CD4-positive, alpha-beta T cell (primary cell): ENCODE measurements at regions of chr11 and their contacts with region 1.

Region 1: GRCh38 chr11:118870396-118871345 is 13.0 kb upstream of the CXCR5 start:
- DNase-seq: peak in 6 of 14 experiments; percentile 14 to 66 (median 53)
- ATAC-seq: peak; percentile 44
- H3K4me3 ChIP-seq: peak overlapping the region; percentile 44
- H3K4me3 Mint-ChIP-seq: peak overlapping the region; percentile 76
- H3K27ac ChIP-seq: peak overlapping the region; percentile 94
- H3K27ac Mint-ChIP-seq: peak overlapping the region; percentile 98
- H3K4me1 ChIP-seq: peaks cover 70% of the 10 kb centered on the region
- H3K4me1 Mint-ChIP-seq: peaks cover 53% of the 10 kb centered on the region
- H3K27me3 ChIP-seq: no peaks in the 10 kb centered on the region
- H3K27me3 Mint-ChIP-seq: no peaks in the 10 kb centered on the region
- CTCF ChIP-seq: no peak

Region 2: DNA sequence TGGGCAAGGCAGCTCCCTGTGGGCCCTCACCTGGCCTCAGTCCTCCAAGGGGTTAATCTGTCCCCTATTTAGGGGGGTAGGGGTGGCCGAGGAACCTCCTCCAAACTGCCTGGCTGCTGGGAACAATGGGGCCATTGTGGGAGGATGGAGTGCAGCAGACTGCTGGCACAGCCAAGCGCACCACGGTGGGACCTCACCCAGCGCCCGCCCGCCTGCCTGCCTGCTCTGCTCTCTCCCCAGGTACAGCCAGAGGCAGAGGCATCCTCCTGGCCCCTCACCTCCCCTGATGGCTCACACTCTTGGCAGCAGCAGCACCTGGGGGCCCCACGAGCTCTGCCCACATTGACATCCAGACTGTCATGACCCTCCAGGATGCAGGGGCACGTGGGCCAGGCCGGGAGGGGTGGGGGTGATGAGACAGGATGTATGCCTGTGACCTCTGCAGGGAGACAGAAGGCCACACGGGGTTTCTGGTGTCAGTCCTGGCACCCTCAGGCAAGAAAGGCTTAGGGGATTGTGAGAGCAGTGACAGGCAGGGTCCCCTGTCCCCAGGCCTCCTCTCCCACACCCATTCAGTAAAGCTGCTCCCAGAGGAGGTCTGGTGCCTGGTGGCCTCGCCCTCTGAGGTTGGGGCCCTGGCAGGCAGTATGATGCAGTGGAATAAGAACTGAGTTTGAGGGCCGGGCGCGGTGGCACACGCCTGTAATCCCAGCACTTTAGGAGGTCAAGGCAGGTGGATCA is 43.7 kb after region 1 on chr11:
- CTCF ChIA-PET with region 1: no interaction called
- POLR2A ChIA-PET with region 1: interaction called, 16 read pairs
- intact Hi-C with region 1: no loop called
- DNase-seq: peak in 13 of 14 experiments; percentile 62 to 93 (median 80)
- ATAC-seq: peak; percentile 49
- H3K4me3 ChIP-seq: peak overlapping the region; percentile 54
- H3K4me3 Mint-ChIP-seq: peak overlapping the region; percentile 87
- H3K27ac ChIP-seq: peak overlapping the region; percentile 80 to 96
- H3K27ac Mint-ChIP-seq: peak overlapping the region; percentile 100
- H3K4me1 ChIP-seq: peaks cover 98% of the 10 kb centered on the region
- H3K4me1 Mint-ChIP-seq: peaks cover 86% of the 10 kb centered on the region
- H3K27me3 ChIP-seq: no peaks in the 10 kb centered on the region
- H3K27me3 Mint-ChIP-seq: no peaks in the 10 kb centered on the region
- CTCF ChIP-seq: no peak

Region 3: DNA sequence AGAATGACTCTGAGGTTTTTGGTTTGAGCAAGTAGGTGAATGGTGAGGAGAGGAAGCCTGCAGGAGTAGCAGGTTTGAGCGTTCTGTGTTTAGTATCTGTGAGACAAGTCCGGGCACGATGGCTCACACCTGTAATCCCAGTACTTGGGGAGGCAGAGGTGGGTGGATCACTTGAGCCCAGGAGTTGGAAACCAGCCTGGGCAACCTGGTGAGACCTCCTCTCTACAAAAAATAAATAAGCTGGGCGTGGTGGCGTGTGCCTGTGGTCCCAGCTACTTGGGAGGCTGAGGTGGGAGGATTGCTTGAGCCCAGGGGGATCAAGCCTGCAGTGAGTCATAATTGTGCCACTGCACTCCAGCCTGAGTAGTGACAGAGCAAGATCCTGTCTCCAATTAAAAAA is 117.6 kb after region 1 on chr11:
- CTCF ChIA-PET with region 1: no interaction called
- POLR2A ChIA-PET with region 1: no interaction called
- intact Hi-C with region 1: no loop called
- DNase-seq: no peak
- ATAC-seq: no peak
- H3K4me3 ChIP-seq: no peak overlapping the region
- H3K4me3 Mint-ChIP-seq: no peak overlapping the region
- H3K27ac ChIP-seq: no peak overlapping the region
- H3K27ac Mint-ChIP-seq: no peak overlapping the region
- H3K4me1 ChIP-seq: no peaks in the 10 kb centered on the region
- H3K4me1 Mint-ChIP-seq: no peaks in the 10 kb centered on the region
- H3K27me3 ChIP-seq: no peaks in the 10 kb centered on the region
- H3K27me3 Mint-ChIP-seq: no peaks in the 10 kb centered on the region
- CTCF ChIP-seq: no peak

Region 4: GRCh38 chr11:119051440-119052162 is 180.9 kb after region 1 on chr11:
- CTCF ChIA-PET with region 1: no interaction called
- POLR2A ChIA-PET with region 1: no interaction called
- intact Hi-C with region 1: loop called in 1 of 2 experiments (anchors 5 kb)
- DNase-seq: peak in 2 of 14 experiments; percentile 68 to 76
- ATAC-seq: peak; percentile 20
- H3K4me3 ChIP-seq: no peak overlapping the region
- H3K4me3 Mint-ChIP-seq: no peak overlapping the region
- H3K27ac ChIP-seq: no peak overlapping the region
- H3K27ac Mint-ChIP-seq: peak overlapping the region; percentile 27
- H3K4me1 ChIP-seq: peaks cover 32% of the 10 kb centered on the region
- H3K4me1 Mint-ChIP-seq: peaks cover 23% of the 10 kb centered on the region
- H3K27me3 ChIP-seq: no peaks in the 10 kb centered on the region
- H3K27me3 Mint-ChIP-seq: no peaks in the 10 kb centered on the region
- CTCF ChIP-seq: no peak

Region 5: GRCh38 chr11:119134389-119134978 is 263.8 kb after region 1 on chr11:
- CTCF ChIA-PET with region 1: no interaction called
- POLR2A ChIA-PET with region 1: no interaction called
- intact Hi-C with region 1: no loop called
- DNase-seq: peak in 2 of 14 experiments; percentile 39 to 46
- ATAC-seq: no peak
- H3K4me3 ChIP-seq: no peak overlapping the region
- H3K4me3 Mint-ChIP-seq: no peak overlapping the region
- H3K27ac ChIP-seq: no peak overlapping the region
- H3K27ac Mint-ChIP-seq: no peak overlapping the region
- H3K4me1 ChIP-seq: no peaks in the 10 kb centered on the region
- H3K4me1 Mint-ChIP-seq: no peaks in the 10 kb centered on the region
- H3K27me3 ChIP-seq: no peaks in the 10 kb centered on the region
- H3K27me3 Mint-ChIP-seq: peaks cover 8% of the 10 kb centered on the region
- CTCF ChIP-seq: peak; percentile 18

Region 6: GRCh38 chr11:119218141-119218878 is 347.6 kb after region 1 on chr11:
- CTCF ChIA-PET with region 1: no interaction called
- POLR2A ChIA-PET with region 1: no interaction called
- intact Hi-C with region 1: no loop called
- DNase-seq: peak in 1 of 14 experiments; percentile 11
- ATAC-seq: peak; percentile 32
- H3K4me3 ChIP-seq: no peak overlapping the region
- H3K4me3 Mint-ChIP-seq: no peak overlapping the region
- H3K27ac ChIP-seq: no peak overlapping the region
- H3K27ac Mint-ChIP-seq: peak overlapping the region; percentile 31
- H3K4me1 ChIP-seq: peaks cover 34% of the 10 kb centered on the region
- H3K4me1 Mint-ChIP-seq: peaks cover 64% of the 10 kb centered on the region
- H3K27me3 ChIP-seq: no peaks in the 10 kb centered on the region
- H3K27me3 Mint-ChIP-seq: no peaks in the 10 kb centered on the region
- CTCF ChIP-seq: no peak